CD4-positive, alpha-beta memory T cell (primary cell): ENCODE measurements at regions of chr18 and their contacts with region 1.

Region 1: GRCh38 chr18:59402432-59403090 is 43.5 kb upstream of the LMAN1 start:
- DNase-seq: peak; percentile 59 to 63 (median 62)
- H3K4me3 ChIP-seq: no peak overlapping the region
- H3K4me3 Mint-ChIP-seq: no peak overlapping the region
- H3K27ac ChIP-seq: no peak overlapping the region
- H3K27ac Mint-ChIP-seq: no peak overlapping the region
- H3K4me1 ChIP-seq: no peaks in the 10 kb centered on the region
- H3K4me1 Mint-ChIP-seq: peaks cover 0 to 2% (median under 1%) of the 10 kb centered on the region in 4 donors
- H3K27me3 ChIP-seq: no peaks in the 10 kb centered on the region
- H3K27me3 Mint-ChIP-seq: peaks cover 0 to 1% of the 10 kb centered on the region in 2 donors

Region 2: DNA sequence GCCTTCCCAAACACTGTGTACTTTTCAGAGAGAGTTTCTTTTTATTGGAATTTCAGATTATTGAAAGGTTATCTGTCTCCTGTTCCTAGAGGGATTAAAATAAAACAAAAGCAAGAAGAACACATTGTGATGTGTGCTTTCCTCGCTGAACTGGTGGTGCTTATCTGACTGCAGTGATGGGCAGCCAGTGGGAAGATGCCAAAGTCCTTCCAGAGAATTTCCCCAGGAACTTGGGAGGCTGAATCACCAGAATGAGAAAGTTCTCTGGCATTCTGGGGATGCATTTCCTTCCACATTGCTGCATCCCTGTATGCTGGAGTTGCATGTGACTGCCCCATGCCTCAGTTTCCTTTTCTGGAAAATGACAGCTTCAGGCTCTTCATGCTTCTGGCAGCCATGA is 316.8 kb before region 1 on chr18:
- CTCF ChIA-PET with region 1: interaction called, 25 read pairs
- POLR2A ChIA-PET with region 1: no interaction called
- intact Hi-C with region 1: loop called (anchors 2 kb)
- DNase-seq: no peak
- H3K4me3 ChIP-seq: no peak overlapping the region
- H3K4me3 Mint-ChIP-seq: no peak overlapping the region
- H3K27ac ChIP-seq: no peak overlapping the region
- H3K27ac Mint-ChIP-seq: no peak overlapping the region
- H3K4me1 ChIP-seq: peaks cover 18% of the 10 kb centered on the region
- H3K4me1 Mint-ChIP-seq: peaks cover 8 to 18% (median 12%) of the 10 kb centered on the region in 4 donors
- H3K27me3 ChIP-seq: peaks cover 10% of the 10 kb centered on the region
- H3K27me3 Mint-ChIP-seq: peaks cover 15 to 20% of the 10 kb centered on the region in 2 donors

Region 3: GRCh38 chr18:59308248-59308937 is 94.2 kb before region 1 on chr18:
- CTCF ChIA-PET with region 1: interaction called, 262 read pairs
- POLR2A ChIA-PET with region 1: no interaction called
- intact Hi-C with region 1: loop called (anchors 2 kb)
- DNase-seq: peak; percentile 38 to 65 (median 53)
- H3K4me3 ChIP-seq: peak overlapping the region in 1 of 2 donors; percentile 43
- H3K4me3 Mint-ChIP-seq: peak overlapping the region; percentile 42 to 78 (median 66)
- H3K27ac ChIP-seq: no peak overlapping the region
- H3K27ac Mint-ChIP-seq: no peak overlapping the region
- H3K4me1 ChIP-seq: peaks cover 11% of the 10 kb centered on the region
- H3K4me1 Mint-ChIP-seq: peaks cover 0 to 2% (median 0%) of the 10 kb centered on the region in 4 donors
- H3K27me3 ChIP-seq: peaks cover 6% of the 10 kb centered on the region
- H3K27me3 Mint-ChIP-seq: peaks cover 24 to 41% of the 10 kb centered on the region in 2 donors

Region 4: DNA sequence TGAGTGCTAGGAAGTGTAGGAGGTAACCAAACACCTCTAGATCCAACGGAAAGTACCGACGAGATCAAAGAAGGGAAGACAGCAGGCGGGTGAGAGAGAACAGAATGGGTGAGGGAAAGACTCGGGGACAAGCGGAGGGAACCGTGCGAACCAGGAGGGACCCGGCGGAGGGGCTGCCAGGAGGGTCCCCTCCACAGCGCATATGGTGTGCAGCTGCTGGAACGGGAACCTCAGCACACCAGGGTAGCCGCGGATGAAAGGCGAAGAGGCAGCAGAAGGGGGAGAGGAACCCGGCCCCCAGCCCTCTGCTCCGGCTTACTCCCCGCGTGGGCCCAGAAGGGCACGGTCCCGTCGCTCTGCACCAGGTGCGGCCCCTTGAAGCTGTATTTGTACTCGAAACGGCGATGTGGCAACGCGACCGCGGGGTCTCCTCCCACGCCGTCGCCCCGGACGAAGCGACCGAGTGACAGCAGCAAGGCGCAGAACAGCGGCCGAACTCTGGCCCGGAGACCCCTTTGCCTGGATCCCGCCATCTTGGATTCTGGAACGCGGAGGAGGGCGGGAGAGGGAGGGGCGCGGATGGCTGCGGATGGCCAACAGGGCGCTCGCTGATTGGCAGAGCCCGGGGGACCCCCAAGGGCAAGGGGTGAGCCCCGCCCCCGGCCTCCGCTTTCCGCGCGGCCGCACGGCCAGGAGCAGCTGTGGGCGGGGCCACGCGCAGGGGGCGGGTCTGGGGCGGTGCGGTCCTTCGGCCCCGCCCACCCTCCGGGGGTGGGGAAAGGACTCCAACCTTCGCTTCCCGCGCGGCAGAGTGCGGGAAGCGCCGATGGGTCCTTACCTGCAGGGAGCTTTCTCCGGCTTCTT is 43.6 kb before region 1 on chr18 and contains the start of gene LMAN1:
- CTCF ChIA-PET with region 1: interaction called, 6 read pairs
- POLR2A ChIA-PET with region 1: no interaction called
- intact Hi-C with region 1: loop called (anchors 2 kb)
- DNase-seq: peak; percentile 85 to 88 (median 87)
- H3K4me3 ChIP-seq: peak within 1 kb of the TSS; percentile 76 to 92
- H3K4me3 Mint-ChIP-seq: peak within 1 kb of the TSS; percentile 91 to 100 (median 98)
- H3K27ac ChIP-seq: peak within 1 kb of the TSS; percentile 95
- H3K27ac Mint-ChIP-seq: peak within 1 kb of the TSS; percentile 91 to 99 (median 97)
- H3K4me1 ChIP-seq: peaks cover 38% of the 10 kb centered on the region
- H3K4me1 Mint-ChIP-seq: peaks cover 23 to 52% (median 35%) of the 10 kb centered on the region in 4 donors
- H3K27me3 ChIP-seq: no peaks in the 10 kb centered on the region
- H3K27me3 Mint-ChIP-seq: peaks cover 0 to 2% of the 10 kb centered on the region in 2 donors
- total RNA-seq, gene LMAN1: 55.7 to 59.6 TPM

Region 5: GRCh38 chr18:59470561-59471121 is 68.1 kb after region 1 on chr18:
- CTCF ChIA-PET with region 1: no interaction called
- POLR2A ChIA-PET with region 1: no interaction called
- intact Hi-C with region 1: no loop called
- DNase-seq: no peak
- H3K4me3 ChIP-seq: no peak overlapping the region
- H3K4me3 Mint-ChIP-seq: no peak overlapping the region
- H3K27ac ChIP-seq: no peak overlapping the region
- H3K27ac Mint-ChIP-seq: no peak overlapping the region
- H3K4me1 ChIP-seq: no peaks in the 10 kb centered on the region
- H3K4me1 Mint-ChIP-seq: no peaks in the 10 kb centered on the region
- H3K27me3 ChIP-seq: no peaks in the 10 kb centered on the region
- H3K27me3 Mint-ChIP-seq: peaks cover 8 to 9% of the 10 kb centered on the region in 2 donors